AG04450 (cell line): ENCODE measurements at regions of chr1 and their contacts with region 1.

Region 1: GRCh38 chr1:31944205-31945089 is 6.3 kb upstream of the PTP4A2 start:
- DNase-seq: peak; percentile 48
- H3K4me3 ChIP-seq: peak overlapping the region; percentile 45
- H3K27ac ChIP-seq: peak overlapping the region; percentile 98
- H3K27me3 ChIP-seq: no peaks in the 10 kb centered on the region
- CTCF ChIP-seq: no peak

Region 2: GRCh38 chr1:31955917-31956736 is 11.7 kb after region 1 on chr1:
- CTCF ChIA-PET with region 1: interaction called, 40 read pairs
- POLR2A ChIA-PET with region 1: interaction called, 38 read pairs
- DNase-seq: peak; percentile 98
- H3K4me3 ChIP-seq: no peak overlapping the region
- H3K27ac ChIP-seq: peak overlapping the region; percentile 99
- H3K27me3 ChIP-seq: no peaks in the 10 kb centered on the region
- CTCF ChIP-seq: peak; percentile 64

Region 3: DNA sequence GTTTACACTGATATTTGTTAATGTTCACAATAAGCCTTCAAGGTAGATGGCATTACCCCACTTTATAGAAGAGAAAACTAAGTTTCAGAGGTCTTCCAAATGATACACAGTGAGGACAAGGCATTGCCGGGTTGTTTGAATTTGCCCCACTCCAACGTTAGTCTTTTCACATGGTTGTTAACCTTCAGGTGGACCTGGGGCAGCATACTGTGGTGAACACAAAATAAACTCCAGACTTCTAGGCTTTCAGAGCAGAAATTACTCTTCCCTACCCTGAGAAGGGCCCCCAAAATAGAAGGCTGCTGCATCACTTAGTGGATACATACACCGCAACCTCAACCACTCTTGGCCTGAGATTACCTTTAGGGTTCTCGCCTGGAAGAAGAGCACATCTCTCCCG is 65.8 kb after region 1 on chr1:
- CTCF ChIA-PET with region 1: no interaction called
- POLR2A ChIA-PET with region 1: no interaction called
- DNase-seq: no peak
- H3K4me3 ChIP-seq: no peak overlapping the region
- H3K27ac ChIP-seq: no peak overlapping the region
- H3K27me3 ChIP-seq: no peaks in the 10 kb centered on the region
- CTCF ChIP-seq: no peak